ENCODE measurements at regions of chr5 and their contacts with region 1.

Region 1: GRCh38 chr5:72307968-72308852 is 11.8 kb downstream of the MRPS27 start:
- DNase-seq: peak; percentile 97
- ATAC-seq: peak; percentile 99
- H3K4me3 Mint-ChIP-seq: peak overlapping the region; percentile 86
- H3K27ac Mint-ChIP-seq: peak overlapping the region; percentile 96
- H3K4me1 Mint-ChIP-seq: peaks cover 28% of the 10 kb centered on the region
- H3K27me3 Mint-ChIP-seq: no peaks in the 10 kb centered on the region

Region 2: DNA sequence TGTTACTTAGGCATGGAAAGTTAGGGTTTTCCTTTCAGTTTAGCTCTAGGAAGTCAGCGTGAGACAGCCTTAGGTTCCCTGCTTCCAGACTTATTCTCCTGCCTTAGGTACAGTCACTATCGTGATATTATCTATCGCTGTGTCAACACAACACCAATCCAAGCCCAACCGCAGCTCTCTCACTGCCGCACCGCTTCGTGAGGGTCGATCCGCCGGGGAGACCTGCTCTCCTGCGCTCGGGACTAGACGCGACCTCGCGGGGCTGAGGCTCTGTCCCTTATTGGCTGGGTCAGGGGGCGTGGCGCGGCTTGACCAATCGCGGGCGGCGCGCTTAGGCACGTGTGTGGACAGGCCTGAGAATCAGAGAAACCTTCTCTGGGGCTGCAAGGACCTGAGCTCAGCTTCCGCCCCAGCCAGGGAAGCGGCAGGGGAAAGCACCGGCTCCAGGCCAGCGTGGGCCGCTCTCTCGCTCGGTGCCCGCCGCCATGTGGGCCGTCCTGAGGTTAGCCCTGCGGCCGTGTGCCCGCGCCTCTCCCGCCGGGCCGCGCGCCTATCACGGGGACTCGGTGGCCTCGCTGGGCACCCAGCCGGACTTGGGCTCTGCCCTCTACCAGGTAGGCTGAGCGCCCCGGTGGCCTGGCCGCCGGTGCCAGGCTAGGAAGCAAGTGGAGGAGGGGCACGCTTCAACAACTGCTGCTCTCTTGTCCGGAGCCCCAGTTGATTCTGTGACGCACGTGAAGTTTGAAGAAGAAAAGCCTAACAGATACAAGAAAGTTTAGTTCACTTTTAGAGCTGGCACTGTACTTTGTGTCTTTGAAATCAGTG is 721.1 kb before region 1 on chr5 and contains the start of gene MCCC2:
- CTCF ChIA-PET with region 1: no interaction called
- POLR2A ChIA-PET with region 1: no interaction called
- intact Hi-C with region 1: loop called (anchors 1 to 5 kb)
- DNase-seq: peak; percentile 98
- ATAC-seq: peak; percentile 99
- H3K4me3 Mint-ChIP-seq: peak within 1 kb of the TSS; percentile 80
- H3K27ac Mint-ChIP-seq: peak within 1 kb of the TSS; percentile 96
- H3K4me1 Mint-ChIP-seq: peaks cover 36% of the 10 kb centered on the region
- H3K27me3 Mint-ChIP-seq: no peaks in the 10 kb centered on the region
- total RNA-seq, gene MCCC2: 52.2 to 56.4 TPM

Region 3: DNA sequence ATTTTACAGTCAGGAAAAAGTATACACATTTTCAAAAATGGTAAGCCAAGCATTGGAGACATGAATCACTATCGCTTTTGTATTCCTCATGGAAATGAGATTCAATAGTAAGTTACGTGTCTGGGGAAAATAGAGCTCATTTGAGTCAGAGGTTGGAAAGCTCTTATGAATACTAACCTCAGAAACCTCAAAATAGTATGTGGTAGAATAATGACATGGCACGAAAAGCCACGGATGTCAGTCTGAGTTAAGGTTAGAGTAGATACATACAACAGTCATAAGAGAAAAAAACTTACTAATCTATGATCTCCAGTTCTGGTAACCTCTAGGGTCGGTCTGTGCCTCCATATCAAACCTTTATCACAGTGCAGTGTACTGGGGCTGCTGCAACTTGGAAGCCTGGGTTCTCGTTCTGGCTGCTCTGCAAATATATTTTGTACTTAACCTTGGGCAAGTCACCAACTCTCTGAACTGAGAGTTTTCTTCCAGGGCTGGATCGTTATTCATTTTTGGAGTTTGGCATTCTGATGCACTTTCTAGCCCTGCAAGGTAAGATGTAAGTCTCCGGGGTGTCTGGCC is 169.2 kb before region 1 on chr5:
- CTCF ChIA-PET with region 1: interaction called, 3 read pairs
- POLR2A ChIA-PET with region 1: no interaction called
- intact Hi-C with region 1: loop called (anchors 1 kb)
- DNase-seq: peak; percentile 32
- ATAC-seq: peak; percentile 100
- H3K4me3 Mint-ChIP-seq: no peak overlapping the region
- H3K27ac Mint-ChIP-seq: peak overlapping the region; percentile 33
- H3K4me1 Mint-ChIP-seq: peaks cover 15% of the 10 kb centered on the region
- H3K27me3 Mint-ChIP-seq: peaks cover 53% of the 10 kb centered on the region

Region 4: DNA sequence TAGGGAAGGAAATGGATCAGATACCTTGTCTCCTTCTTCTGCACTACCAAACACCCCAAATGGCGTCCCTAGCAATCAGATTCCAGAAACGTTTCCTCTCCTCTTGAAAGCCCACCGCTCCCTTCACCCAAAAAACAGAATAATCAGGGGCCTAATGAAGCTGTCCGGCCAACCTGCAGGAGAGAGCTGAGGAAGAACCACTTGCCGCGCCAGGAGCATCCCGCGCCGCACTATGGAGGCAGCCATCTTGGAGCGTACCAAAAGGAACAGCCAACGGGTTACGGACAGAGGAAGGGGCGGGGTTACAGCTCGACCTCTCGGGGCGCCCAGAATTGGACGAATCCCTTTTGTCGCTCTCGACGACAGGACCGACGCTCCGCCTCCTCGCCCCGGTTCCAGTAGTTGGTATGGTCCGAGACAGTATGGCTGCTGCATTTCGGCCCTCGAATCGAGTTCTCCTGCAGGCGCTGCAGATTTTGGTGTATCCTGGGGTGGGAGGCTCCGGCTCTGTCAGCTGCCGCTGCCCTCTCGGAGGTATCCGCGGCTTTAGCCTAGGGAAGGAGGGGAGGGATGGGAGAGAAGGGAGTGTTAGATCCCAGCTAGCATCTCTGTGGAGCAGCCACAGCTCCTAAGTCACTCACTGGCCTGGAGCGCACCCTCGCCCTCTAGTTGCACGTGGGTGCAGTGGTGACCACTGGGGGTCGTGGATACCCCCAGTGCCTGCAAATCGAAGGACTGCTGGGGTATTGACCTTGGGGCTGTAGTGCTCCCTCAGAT is 12.0 kb after region 1 on chr5 and contains the starts of genes MRPS27 and PTCD2:
- CTCF ChIA-PET with region 1: interaction called, 39 read pairs
- POLR2A ChIA-PET with region 1: interaction called, 10 read pairs
- intact Hi-C with region 1: loop called (anchors 1 kb)
- DNase-seq: peak; percentile 97
- ATAC-seq: peak; percentile 99
- H3K4me3 Mint-ChIP-seq: peak within 1 kb of the TSS; percentile 99
- H3K27ac Mint-ChIP-seq: peak within 1 kb of the TSS; percentile 93
- H3K4me1 Mint-ChIP-seq: peaks cover 38% of the 10 kb centered on the region
- H3K27me3 Mint-ChIP-seq: no peaks in the 10 kb centered on the region
- total RNA-seq, gene MRPS27: 93.3 to 113 TPM
- total RNA-seq, gene PTCD2: 10.4 to 14.1 TPM

Region 5: GRCh38 chr5:72336781-72337553 is 28.8 kb after region 1 on chr5:
- CTCF ChIA-PET with region 1: no interaction called
- POLR2A ChIA-PET with region 1: no interaction called
- intact Hi-C with region 1: no loop called
- DNase-seq: no peak
- ATAC-seq: no peak
- H3K4me3 Mint-ChIP-seq: no peak overlapping the region
- H3K27ac Mint-ChIP-seq: no peak overlapping the region
- H3K4me1 Mint-ChIP-seq: no peaks in the 10 kb centered on the region
- H3K27me3 Mint-ChIP-seq: no peaks in the 10 kb centered on the region

Region 6: GRCh38 chr5:73565139-73565968 is 1257.1 kb after region 1 on chr5 and contains the starts of genes ANKRA2 and UTP15:
- CTCF ChIA-PET with region 1: no interaction called
- POLR2A ChIA-PET with region 1: no interaction called
- intact Hi-C with region 1: loop called in 1 of 2 experiments (anchors 10 kb)
- DNase-seq: peak; percentile 100
- ATAC-seq: peak; percentile 92
- H3K4me3 Mint-ChIP-seq: peak within 1 kb of the TSS; percentile 93
- H3K27ac Mint-ChIP-seq: peak within 1 kb of the TSS; percentile 100
- H3K4me1 Mint-ChIP-seq: peaks cover 33% of the 10 kb centered on the region
- H3K27me3 Mint-ChIP-seq: no peaks in the 10 kb centered on the region
- total RNA-seq, gene ANKRA2: 16.3 to 18.4 TPM
- total RNA-seq, gene UTP15: 33.6 to 42.4 TPM

Measured in activated CD4-positive, alpha-beta T cell treated with anti-CD3 and anti-CD28 coated beads for 36 hours (primary cell).